Activated B cell treated with CpG ODN at 0.5 μM for 24 hours (primary cell): ENCODE measurements at regions of chr16 and their contacts with region 1.

Region 1: GRCh38 chr16:10521681-10522274 is 58.6 kb downstream of the EMP2 start:
- DNase-seq: no peak
- ATAC-seq: peak; percentile 88
- H3K4me3 Mint-ChIP-seq: no peak overlapping the region
- H3K27ac Mint-ChIP-seq: no peak overlapping the region
- H3K4me1 Mint-ChIP-seq: peaks cover 4% of the 10 kb centered on the region
- H3K27me3 Mint-ChIP-seq: no peaks in the 10 kb centered on the region
- CTCF ChIP-seq: no peak

Region 2: DNA sequence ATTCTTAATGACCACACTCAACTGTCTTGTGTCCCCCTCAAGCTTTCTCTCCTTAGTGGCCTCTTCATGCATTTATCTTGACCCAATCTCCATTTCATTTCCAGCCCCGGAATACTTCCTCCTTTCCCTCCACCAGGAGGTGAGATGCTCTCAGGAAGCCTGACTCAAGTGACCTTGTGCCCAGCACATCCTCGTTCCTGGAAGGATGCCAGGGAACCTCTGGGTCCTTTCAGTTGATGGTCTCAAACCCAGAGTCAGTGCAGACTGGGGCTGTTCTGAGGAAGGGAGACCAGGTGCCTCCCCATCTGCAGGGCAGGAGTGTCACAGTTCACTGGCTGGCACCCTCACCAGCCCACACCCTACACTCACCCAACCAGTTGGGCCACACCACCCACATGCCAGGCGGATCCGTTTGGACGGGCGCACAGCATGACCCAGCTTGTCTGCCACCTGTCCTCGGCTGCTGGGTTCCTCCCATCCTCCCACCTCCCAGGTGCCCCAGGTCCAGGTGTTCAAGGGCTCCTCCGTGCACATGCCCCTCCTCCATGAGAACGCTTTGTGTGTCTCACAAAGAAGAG is 72.7 kb after region 1 on chr16:
- CTCF ChIA-PET with region 1: no interaction called
- POLR2A ChIA-PET with region 1: no interaction called
- intact Hi-C with region 1: loop called (anchors 10 kb)
- DNase-seq: no peak
- ATAC-seq: peak; percentile 54
- H3K4me3 Mint-ChIP-seq: no peak overlapping the region
- H3K27ac Mint-ChIP-seq: no peak overlapping the region
- H3K4me1 Mint-ChIP-seq: peaks cover 31% of the 10 kb centered on the region
- H3K27me3 Mint-ChIP-seq: peaks cover 11% of the 10 kb centered on the region
- CTCF ChIP-seq: no peak